CD14-positive monocyte (primary cell): ENCODE measurements at regions of chr6 and their contacts with region 1.

Region 1: GRCh38 chr6:55277646-55278045 is 49.6 kb upstream of the GFRAL start:
- DNase-seq: no peak
- H3K4me3 ChIP-seq: no peak overlapping the region
- H3K4me3 Mint-ChIP-seq: no peak overlapping the region
- H3K27ac ChIP-seq: no peak overlapping the region
- H3K27ac Mint-ChIP-seq: no peak overlapping the region
- H3K4me1 ChIP-seq: no peaks in the 10 kb centered on the region
- H3K4me1 Mint-ChIP-seq: no peaks in the 10 kb centered on the region
- H3K27me3 ChIP-seq: no peaks in the 10 kb centered on the region
- H3K27me3 Mint-ChIP-seq: peaks cover 2 to 5% (median 3%) of the 10 kb centered on the region in 3 donors
- CTCF ChIP-seq: no peak

Region 2: DNA sequence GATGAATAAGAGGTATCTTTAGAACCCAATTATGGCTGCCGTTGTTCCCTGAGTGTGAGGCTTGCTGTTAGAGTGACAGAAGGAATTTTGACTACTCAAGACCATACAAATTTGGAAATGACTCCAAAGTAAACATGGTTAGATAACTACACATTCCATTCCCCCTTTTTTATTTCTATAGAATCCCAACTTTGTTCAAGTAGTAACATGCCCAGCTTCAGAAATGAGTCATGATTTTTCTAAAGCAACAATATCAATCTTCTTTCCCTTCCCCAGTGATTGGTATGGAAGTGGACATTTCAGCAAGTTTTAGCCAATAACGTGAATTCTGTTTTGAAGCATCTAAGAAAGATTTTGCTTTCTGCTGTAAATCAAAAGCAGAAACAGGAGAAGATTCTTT is 65.5 kb before region 1 on chr6:
- intact Hi-C with region 1: no loop called
- DNase-seq: no peak
- H3K4me3 ChIP-seq: no peak overlapping the region
- H3K4me3 Mint-ChIP-seq: no peak overlapping the region
- H3K27ac ChIP-seq: no peak overlapping the region
- H3K27ac Mint-ChIP-seq: no peak overlapping the region
- H3K4me1 ChIP-seq: no peaks in the 10 kb centered on the region
- H3K4me1 Mint-ChIP-seq: no peaks in the 10 kb centered on the region
- H3K27me3 ChIP-seq: no peaks in the 10 kb centered on the region
- H3K27me3 Mint-ChIP-seq: no peaks in the 10 kb centered on the region
- CTCF ChIP-seq: no peak

Region 3: DNA sequence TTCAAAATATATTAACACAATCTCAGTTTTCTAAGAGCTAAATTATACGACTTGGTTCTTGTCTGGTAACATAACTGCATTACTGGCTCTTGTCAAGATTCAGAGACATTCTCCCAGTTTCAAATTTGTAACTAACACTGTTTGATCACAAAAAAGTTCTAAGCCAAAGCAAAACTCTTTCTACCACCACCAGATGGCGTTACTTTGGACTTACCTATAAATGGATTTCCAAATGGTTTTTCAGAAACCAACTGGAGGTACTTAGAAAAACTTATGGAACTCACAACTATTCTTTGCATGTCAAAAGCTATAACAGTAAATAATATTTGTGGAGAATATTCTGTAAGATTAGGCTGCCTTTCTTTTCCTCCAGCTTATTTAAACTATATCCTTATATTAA is 15.5 kb after region 1 on chr6:
- intact Hi-C with region 1: loop called in 1 of 2 experiments (anchors 2 kb)
- DNase-seq: no peak
- H3K4me3 ChIP-seq: no peak overlapping the region
- H3K4me3 Mint-ChIP-seq: no peak overlapping the region
- H3K27ac ChIP-seq: no peak overlapping the region
- H3K27ac Mint-ChIP-seq: no peak overlapping the region
- H3K4me1 ChIP-seq: no peaks in the 10 kb centered on the region
- H3K4me1 Mint-ChIP-seq: no peaks in the 10 kb centered on the region
- H3K27me3 ChIP-seq: no peaks in the 10 kb centered on the region
- H3K27me3 Mint-ChIP-seq: no peaks in the 10 kb centered on the region
- CTCF ChIP-seq: no peak